ENCODE measurements at regions of chr19 and their contacts with region 1.

Region 1: DNA sequence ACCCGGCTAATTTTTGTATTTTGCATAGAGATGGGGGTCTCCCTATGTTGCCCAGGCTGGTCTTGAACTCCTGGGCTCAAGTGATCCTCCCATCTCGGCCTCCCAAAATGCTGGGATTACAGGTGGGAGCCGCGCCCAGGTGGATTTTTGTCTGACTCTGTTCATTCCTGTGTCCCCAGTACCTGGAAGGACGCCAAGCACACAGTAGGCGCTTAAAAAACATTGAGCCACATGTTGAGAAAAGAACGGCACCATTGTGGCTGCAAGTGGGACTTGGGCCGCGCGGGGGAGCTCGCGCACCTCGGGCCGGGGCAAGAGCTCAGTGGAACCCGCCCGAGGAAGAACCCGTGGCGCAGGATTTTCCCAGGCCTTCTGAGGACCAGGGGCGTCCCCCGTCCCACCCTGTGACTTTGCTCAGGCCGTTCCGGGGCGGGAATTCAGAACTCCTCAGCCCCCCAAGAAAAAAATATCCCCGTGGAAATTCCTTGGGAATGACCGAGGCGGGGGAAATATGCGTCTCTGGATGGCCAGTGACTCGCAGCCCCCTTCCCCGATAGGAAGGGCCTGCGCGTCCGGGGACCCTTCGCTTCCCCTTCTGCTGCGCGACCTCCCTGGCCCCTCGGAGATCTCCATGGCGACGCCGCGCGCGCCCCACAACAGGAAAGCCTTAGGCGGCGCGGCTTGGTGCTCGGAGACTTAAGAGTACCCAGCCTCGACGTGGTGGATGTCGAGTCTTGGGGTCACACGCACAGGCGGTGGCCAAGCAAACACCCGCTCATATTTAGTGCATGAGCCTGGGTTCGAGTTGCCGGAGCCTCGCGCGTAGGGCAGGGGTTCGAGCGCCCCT is 1.4 kb upstream of the ICAM1 start:
- DNase-seq: no peak
- ATAC-seq: peak; percentile 55
- H3K4me3 ChIP-seq: peak overlapping the region; percentile 92
- H3K27ac ChIP-seq: peak overlapping the region; percentile 98
- H3K4me1 ChIP-seq: no peaks in the 10 kb centered on the region; the same call in 1 of the 2 replicates
- H3K27me3 ChIP-seq: no peaks in the 10 kb centered on the region
- CTCF ChIP-seq: peak; percentile 94 to 99 (median 97); a peak in 5 of 6 replicates
- EP300 ChIP-seq: no peak
- POLR2A ChIP-seq: no peak
- RAD21 ChIP-seq: peak; percentile 95

Region 2: GRCh38 chr19:10142701-10143375 is 126.7 kb before region 1 on chr19:
- CTCF ChIA-PET with region 1: no interaction called
- POLR2A ChIA-PET with region 1: no interaction called
- RAD21 ChIA-PET with region 1: no interaction called
- SMC1A ChIA-PET with region 1: no interaction called
- in situ Hi-C with region 1: no loop called
- intact Hi-C with region 1: no loop called
- DNase-seq: no peak
- ATAC-seq: no peak
- H3K4me3 ChIP-seq: no peak overlapping the region
- H3K27ac ChIP-seq: no peak overlapping the region
- H3K4me1 ChIP-seq: no peaks in the 10 kb centered on the region
- H3K27me3 ChIP-seq: no peaks in the 10 kb centered on the region
- CTCF ChIP-seq: no peak
- EP300 ChIP-seq: no peak
- POLR2A ChIP-seq: no peak
- RAD21 ChIP-seq: no peak

Region 3: DNA sequence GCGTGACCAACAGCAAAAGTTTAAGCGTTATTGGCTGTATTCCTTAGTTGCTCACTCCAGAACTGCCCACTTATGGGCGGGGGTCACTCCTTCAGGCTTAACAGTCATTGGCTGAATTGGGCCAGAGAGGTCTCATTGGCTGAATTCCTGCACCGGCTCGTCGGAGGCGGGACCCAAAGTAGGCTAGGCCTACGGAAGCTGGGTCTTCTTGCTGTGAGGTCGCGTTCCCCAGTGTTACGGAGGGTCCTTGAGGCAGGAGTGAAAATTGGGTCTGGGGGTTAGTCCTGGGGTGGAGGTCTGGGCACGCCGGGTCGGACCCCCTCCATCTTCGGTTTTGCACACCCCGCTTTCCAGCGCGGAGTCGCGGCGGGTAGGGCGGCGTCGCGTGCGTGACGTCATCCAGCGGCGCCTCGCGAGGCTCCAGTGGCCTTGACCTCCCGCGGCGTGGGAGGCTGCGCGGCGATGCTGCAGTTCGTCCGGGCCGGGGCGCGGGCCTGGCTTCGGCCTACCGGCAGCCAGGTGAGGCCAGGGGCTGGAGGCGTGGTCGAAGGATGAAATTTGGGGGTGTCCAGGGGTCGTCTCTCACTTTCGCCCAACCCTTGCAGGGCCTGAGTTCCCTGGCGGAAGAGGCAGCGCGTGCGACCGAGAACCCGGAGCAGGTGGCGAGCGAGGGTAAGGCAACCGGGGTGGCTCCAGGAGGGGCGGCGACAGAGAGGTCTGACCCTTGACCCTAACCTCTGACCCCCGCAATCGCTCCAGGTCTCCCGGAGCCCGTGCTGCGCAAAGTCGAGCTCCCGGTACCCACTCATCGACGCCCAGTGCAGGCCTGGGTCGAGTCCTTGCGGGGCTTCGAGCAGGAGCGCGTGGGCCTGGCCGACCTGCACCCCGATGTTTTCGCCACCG is 17.5 kb before region 1 on chr19 and contains the start of gene MRPL4:
- CTCF ChIA-PET with region 1: interaction called, 10 read pairs
- POLR2A ChIA-PET with region 1: interaction called, 3 read pairs
- RAD21 ChIA-PET with region 1: interaction called, 20 read pairs
- SMC1A ChIA-PET with region 1: interaction called, 6 read pairs
- in situ Hi-C with region 1: no loop called
- intact Hi-C with region 1: no loop called
- DNase-seq: peak; percentile 96
- ATAC-seq: peak; percentile 97
- H3K4me3 ChIP-seq: peak within 1 kb of the TSS; percentile 93
- H3K27ac ChIP-seq: peak within 1 kb of the TSS; percentile 96
- H3K4me1 ChIP-seq: peaks cover 17% of the 10 kb centered on the region
- H3K27me3 ChIP-seq: no peaks in the 10 kb centered on the region
- CTCF ChIP-seq: no peak
- EP300 ChIP-seq: no peak
- POLR2A ChIP-seq: peak; percentile 99
- RAD21 ChIP-seq: no peak
- polyA plus RNA-seq, gene MRPL4: 0.79 to 5.8 TPM

Region 4: GRCh38 chr19:10292206-10292788 is 22.7 kb after region 1 on chr19:
- CTCF ChIA-PET with region 1: interaction called, 58 read pairs
- POLR2A ChIA-PET with region 1: interaction called, 69 read pairs
- RAD21 ChIA-PET with region 1: interaction called, 119 read pairs
- SMC1A ChIA-PET with region 1: interaction called, 50 read pairs
- in situ Hi-C with region 1: no loop called
- intact Hi-C with region 1: no loop called
- DNase-seq: no peak
- ATAC-seq: peak; percentile 65
- H3K4me3 ChIP-seq: peak overlapping the region; percentile 77
- H3K27ac ChIP-seq: no peak overlapping the region
- H3K4me1 ChIP-seq: peaks cover 53% of the 10 kb centered on the region
- H3K27me3 ChIP-seq: peaks cover 3 to 16% of the 10 kb centered on the region in 2 experiments
- CTCF ChIP-seq: no peak
- EP300 ChIP-seq: no peak
- POLR2A ChIP-seq: no peak
- RAD21 ChIP-seq: no peak

Region 5: GRCh38 chr19:10368101-10368803 is 98.7 kb after region 1 on chr19:
- CTCF ChIA-PET with region 1: interaction called, 4 read pairs
- POLR2A ChIA-PET with region 1: interaction called, 22 read pairs
- RAD21 ChIA-PET with region 1: interaction called, 13 read pairs
- SMC1A ChIA-PET with region 1: interaction called, 5 read pairs
- in situ Hi-C with region 1: no loop called
- intact Hi-C with region 1: no loop called
- DNase-seq: no peak
- ATAC-seq: peak; percentile 49; the same call in 2 of the 3 replicates
- H3K4me3 ChIP-seq: no peak overlapping the region
- H3K27ac ChIP-seq: no peak overlapping the region
- H3K4me1 ChIP-seq: no peaks in the 10 kb centered on the region
- H3K27me3 ChIP-seq: no peaks in the 10 kb centered on the region
- CTCF ChIP-seq: no peak
- EP300 ChIP-seq: no peak
- POLR2A ChIP-seq: no peak
- RAD21 ChIP-seq: no peak

Region 6: GRCh38 chr19:10403137-10404021 is 133.8 kb after region 1 on chr19 and contains the start of gene CDC37:
- CTCF ChIA-PET with region 1: interaction called, 17 read pairs
- POLR2A ChIA-PET with region 1: interaction called, 5 read pairs
- RAD21 ChIA-PET with region 1: interaction called, 14 read pairs
- SMC1A ChIA-PET with region 1: interaction called, 14 read pairs
- in situ Hi-C with region 1: no loop called
- intact Hi-C with region 1: no loop called
- DNase-seq: peak; percentile 80
- ATAC-seq: peak; percentile 84
- H3K4me3 ChIP-seq: peak within 1 kb of the TSS; percentile 95
- H3K27ac ChIP-seq: peak within 1 kb of the TSS; percentile 82
- H3K4me1 ChIP-seq: peaks cover 34% of the 10 kb centered on the region
- H3K27me3 ChIP-seq: peaks cover 0 to 3% of the 10 kb centered on the region in 2 experiments; a peak in 2 of 4 replicates
- CTCF ChIP-seq: no peak
- EP300 ChIP-seq: no peak
- POLR2A ChIP-seq: peak; percentile 98
- RAD21 ChIP-seq: no peak
- polyA plus RNA-seq, gene CDC37: 4.7 to 8.8 TPM